ENCODE measurements at regions of chr4 and their contacts with region 1.

Region 1: GRCh38 chr4:2441393-2442174 is 22.8 kb downstream of the CFAP99 start:
- DNase-seq: peak; percentile 95
- ATAC-seq: peak; percentile 94
- H3K4me3 Mint-ChIP-seq: no peak overlapping the region
- H3K27ac Mint-ChIP-seq: no peak overlapping the region
- H3K4me1 Mint-ChIP-seq: peaks cover 2% of the 10 kb centered on the region; the same call in 1 of the 2 replicates
- H3K27me3 Mint-ChIP-seq: no peaks in the 10 kb centered on the region; the same call in 1 of the 2 replicates
- CTCF ChIP-seq: peak; percentile 73

Region 2: DNA sequence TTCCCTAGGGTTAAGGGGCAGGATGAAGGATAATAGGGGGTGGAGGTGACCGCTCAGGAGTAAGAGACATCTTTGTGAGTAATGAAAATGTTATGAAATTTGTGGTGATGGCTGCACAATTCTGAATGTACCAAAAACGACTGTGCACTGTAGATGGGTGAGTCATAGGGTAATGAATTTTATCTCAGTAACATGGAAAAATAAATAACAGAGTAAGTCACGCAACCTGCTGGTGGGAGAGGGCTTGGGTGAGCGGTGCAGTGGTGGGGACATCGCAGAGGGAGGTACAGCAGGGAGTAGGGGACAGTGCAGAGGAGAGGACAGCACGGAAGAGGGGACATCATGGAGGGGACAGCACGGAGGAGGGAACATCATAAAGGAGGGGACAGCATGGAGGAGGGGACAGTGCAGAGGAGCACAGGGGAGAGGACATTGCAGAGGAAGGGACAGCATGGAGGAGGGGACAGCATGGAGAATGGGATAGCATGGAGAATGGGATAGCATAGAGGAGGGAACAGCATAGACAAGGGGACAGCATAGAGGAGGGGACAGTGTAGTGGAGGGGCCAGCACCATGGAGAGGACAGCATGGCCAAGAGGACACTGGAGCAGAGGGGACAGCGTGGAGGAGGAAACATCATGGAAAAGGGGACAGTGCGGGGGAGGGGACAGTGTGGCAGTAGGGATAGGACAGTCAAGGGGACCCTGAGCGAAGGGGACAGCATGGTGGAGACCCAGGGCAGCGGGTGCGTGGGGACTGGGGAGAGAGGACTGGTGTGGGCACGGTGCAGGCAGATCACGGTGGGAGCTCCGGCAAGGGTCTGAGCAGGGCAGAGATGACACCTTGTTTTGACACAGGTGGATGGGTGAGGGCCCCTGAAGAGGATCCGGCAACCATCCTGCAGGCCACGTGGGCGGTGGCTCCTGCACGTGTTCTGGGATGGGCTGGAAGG is 111.2 kb before region 1 on chr4:
- CTCF ChIA-PET with region 1: no interaction called
- POLR2A ChIA-PET with region 1: no interaction called
- DNase-seq: no peak
- ATAC-seq: peak; percentile 16; the same call in 1 of the 2 replicates
- H3K4me3 Mint-ChIP-seq: no peak overlapping the region
- H3K27ac Mint-ChIP-seq: no peak overlapping the region
- H3K4me1 Mint-ChIP-seq: no peaks in the 10 kb centered on the region
- H3K27me3 Mint-ChIP-seq: no peaks in the 10 kb centered on the region; the same call in 1 of the 2 replicates
- CTCF ChIP-seq: no peak

Region 3: GRCh38 chr4:2412885-2413716 is 28.5 kb before region 1 on chr4:
- CTCF ChIA-PET with region 1: interaction called, 27 read pairs
- POLR2A ChIA-PET with region 1: no interaction called
- DNase-seq: peak; percentile 80
- ATAC-seq: peak; percentile 73
- H3K4me3 Mint-ChIP-seq: peak overlapping the region; percentile 62
- H3K27ac Mint-ChIP-seq: peak overlapping the region; percentile 91
- H3K4me1 Mint-ChIP-seq: peaks cover 55% of the 10 kb centered on the region
- H3K27me3 Mint-ChIP-seq: peaks cover 44% of the 10 kb centered on the region
- CTCF ChIP-seq: no peak

Region 4: GRCh38 chr4:2428496-2429213 is 12.9 kb before region 1 on chr4:
- CTCF ChIA-PET with region 1: interaction called, 31 read pairs
- POLR2A ChIA-PET with region 1: no interaction called
- DNase-seq: no peak
- ATAC-seq: no peak
- H3K4me3 Mint-ChIP-seq: no peak overlapping the region
- H3K27ac Mint-ChIP-seq: no peak overlapping the region; the same call in 1 of the 2 replicates
- H3K4me1 Mint-ChIP-seq: no peaks in the 10 kb centered on the region; the same call in 1 of the 2 replicates
- H3K27me3 Mint-ChIP-seq: no peaks in the 10 kb centered on the region
- CTCF ChIP-seq: no peak

Region 5: DNA sequence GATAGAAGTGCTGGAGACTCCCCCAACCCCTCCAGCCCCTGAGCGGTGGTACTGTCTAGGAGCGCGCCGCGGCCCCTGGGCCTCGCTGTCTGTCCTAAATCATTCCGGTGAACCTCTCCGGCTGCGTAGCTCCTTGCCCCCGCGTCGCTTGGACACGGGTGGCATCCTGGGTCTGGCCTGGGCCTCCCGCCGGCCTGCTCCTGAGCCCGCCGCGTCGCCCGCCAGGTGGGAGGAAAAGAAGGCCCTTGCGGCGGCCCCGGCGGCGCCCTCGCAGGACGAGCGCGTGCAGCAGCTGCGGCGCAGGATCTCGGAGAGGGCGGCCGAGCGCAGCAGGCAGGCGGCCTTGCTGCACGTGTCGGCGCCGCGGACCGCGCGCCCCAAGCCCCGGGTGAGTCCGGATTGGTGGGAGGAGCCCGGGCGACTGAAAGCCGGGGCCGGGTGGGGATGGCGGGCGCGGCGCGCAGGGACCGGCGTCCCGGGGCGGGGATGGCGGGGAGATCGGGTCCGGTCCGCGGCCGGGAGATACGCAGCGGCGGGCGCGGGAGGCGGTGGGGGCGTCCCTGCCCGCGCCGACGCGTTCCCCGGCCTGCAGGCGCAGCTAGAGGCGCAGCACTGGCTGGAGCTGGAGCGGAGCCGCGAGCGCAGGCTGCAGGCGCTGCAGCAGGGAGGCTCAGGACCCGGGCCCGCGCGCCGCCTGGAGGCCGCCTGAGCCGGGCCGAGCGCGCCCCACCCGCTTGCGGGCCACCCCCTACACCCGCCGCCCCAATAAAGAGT is 20.8 kb after region 1 on chr4:
- CTCF ChIA-PET with region 1: interaction called, 28 read pairs
- POLR2A ChIA-PET with region 1: no interaction called
- DNase-seq: peak; percentile 72
- ATAC-seq: peak; percentile 83
- H3K4me3 Mint-ChIP-seq: peak overlapping the region; percentile 75
- H3K27ac Mint-ChIP-seq: no peak overlapping the region
- H3K4me1 Mint-ChIP-seq: peaks cover 18% of the 10 kb centered on the region
- H3K27me3 Mint-ChIP-seq: peaks cover 37% of the 10 kb centered on the region
- CTCF ChIP-seq: no peak